GM12878 (cell line): ENCODE measurements at regions of chr20 and their contacts with region 1.

Region 1: DNA sequence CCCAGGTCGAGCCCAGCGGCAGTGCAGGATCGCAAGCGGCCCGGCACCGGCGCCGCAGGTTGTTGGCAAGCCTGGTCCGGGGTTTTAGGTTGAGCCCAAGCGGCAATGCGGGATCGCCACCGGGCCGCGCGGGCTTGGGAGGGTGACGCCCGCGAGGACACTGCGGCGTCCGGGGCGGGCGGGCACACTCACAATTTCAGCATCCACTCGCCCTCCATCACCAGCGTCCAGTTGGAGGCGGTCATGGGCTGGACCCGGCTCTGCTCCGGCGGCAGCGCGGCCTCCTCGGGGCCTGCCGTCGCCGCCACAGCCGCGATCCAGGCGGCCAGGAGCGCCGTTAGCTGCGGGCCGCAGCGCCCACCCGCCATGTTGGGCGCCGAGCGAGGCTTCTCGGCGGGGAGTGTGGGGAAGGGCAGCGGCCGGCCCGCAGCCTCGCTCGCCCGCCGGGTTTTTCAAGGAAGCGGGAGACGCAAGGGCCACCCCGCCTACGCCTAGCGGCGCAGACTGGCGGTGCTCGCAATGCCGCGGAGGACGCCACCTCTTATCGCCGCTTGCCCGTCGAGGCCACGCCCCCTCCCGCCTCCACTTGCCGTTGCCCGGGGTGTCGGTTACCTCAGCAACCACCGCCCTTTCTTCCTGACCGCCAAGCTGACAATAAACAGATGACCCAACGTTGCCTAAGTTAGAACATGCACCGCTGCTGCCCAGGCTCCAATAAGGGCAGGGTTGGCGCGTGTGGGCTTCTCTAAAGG is at the start of gene TMX4:
- DNase-seq: peak; percentile 76
- ATAC-seq: peak; percentile 93
- H3K4me3 ChIP-seq: peak within 1 kb of the TSS; percentile 70
- H3K27ac ChIP-seq: peak within 1 kb of the TSS; percentile 74
- H3K4me1 ChIP-seq: peaks cover 12% of the 10 kb centered on the region
- H3K27me3 ChIP-seq: no peaks in the 10 kb centered on the region
- CTCF ChIP-seq: peak in 2 of 3 experiments; percentile 8 to 36; a peak in 2 of 6 replicates
- EP300 ChIP-seq: peak; percentile 24 to 61; a peak in 2 of 4 replicates
- POLR2A ChIP-seq: peak; percentile 94
- RAD21 ChIP-seq: no peak
- polyA plus RNA-seq, gene TMX4: 3.9 to 4.4 TPM

Region 2: GRCh38 chr20:7665376-7665775 is 354.0 kb before region 1 on chr20:
- CTCF ChIA-PET with region 1: no interaction called
- POLR2A ChIA-PET with region 1: no interaction called
- RAD21 ChIA-PET with region 1: no interaction called
- SMC1A ChIA-PET with region 1: no interaction called
- in situ Hi-C with region 1: no loop called
- intact Hi-C with region 1: no loop called
- DNase-seq: no peak
- ATAC-seq: no peak
- H3K4me3 ChIP-seq: no peak overlapping the region
- H3K27ac ChIP-seq: no peak overlapping the region
- H3K4me1 ChIP-seq: no peaks in the 10 kb centered on the region
- H3K27me3 ChIP-seq: no peaks in the 10 kb centered on the region
- CTCF ChIP-seq: no peak
- EP300 ChIP-seq: no peak
- POLR2A ChIP-seq: no peak
- RAD21 ChIP-seq: no peak

Region 3: GRCh38 chr20:8223091-8223870 is 203.9 kb after region 1 on chr20:
- CTCF ChIA-PET with region 1: no interaction called
- POLR2A ChIA-PET with region 1: no interaction called
- RAD21 ChIA-PET with region 1: no interaction called
- SMC1A ChIA-PET with region 1: no interaction called
- in situ Hi-C with region 1: no loop called
- intact Hi-C with region 1: loop called (anchors 10 kb)
- DNase-seq: no peak
- ATAC-seq: no peak
- H3K4me3 ChIP-seq: no peak overlapping the region
- H3K27ac ChIP-seq: no peak overlapping the region
- H3K4me1 ChIP-seq: peaks cover 4% of the 10 kb centered on the region; the same call in 1 of the 2 replicates
- H3K27me3 ChIP-seq: no peaks in the 10 kb centered on the region
- CTCF ChIP-seq: no peak
- EP300 ChIP-seq: no peak
- POLR2A ChIP-seq: no peak
- RAD21 ChIP-seq: no peak

Region 4: GRCh38 chr20:8244637-8245036 is 225.2 kb after region 1 on chr20:
- CTCF ChIA-PET with region 1: no interaction called
- POLR2A ChIA-PET with region 1: no interaction called
- RAD21 ChIA-PET with region 1: no interaction called
- SMC1A ChIA-PET with region 1: no interaction called
- in situ Hi-C with region 1: no loop called
- intact Hi-C with region 1: no loop called
- DNase-seq: no peak
- ATAC-seq: no peak
- H3K4me3 ChIP-seq: no peak overlapping the region
- H3K27ac ChIP-seq: no peak overlapping the region
- H3K4me1 ChIP-seq: no peaks in the 10 kb centered on the region
- H3K27me3 ChIP-seq: no peaks in the 10 kb centered on the region
- CTCF ChIP-seq: no peak
- EP300 ChIP-seq: no peak
- POLR2A ChIP-seq: no peak
- RAD21 ChIP-seq: no peak

Region 5: GRCh38 chr20:8515810-8516435 is 496.5 kb after region 1 on chr20:
- CTCF ChIA-PET with region 1: no interaction called
- POLR2A ChIA-PET with region 1: no interaction called
- RAD21 ChIA-PET with region 1: no interaction called
- SMC1A ChIA-PET with region 1: no interaction called
- in situ Hi-C with region 1: no loop called
- intact Hi-C with region 1: no loop called
- DNase-seq: no peak
- ATAC-seq: no peak
- H3K4me3 ChIP-seq: no peak overlapping the region
- H3K27ac ChIP-seq: no peak overlapping the region
- H3K4me1 ChIP-seq: no peaks in the 10 kb centered on the region
- H3K27me3 ChIP-seq: no peaks in the 10 kb centered on the region
- CTCF ChIP-seq: no peak
- EP300 ChIP-seq: no peak
- POLR2A ChIP-seq: no peak
- RAD21 ChIP-seq: no peak